T-cell (primary cell): ENCODE measurements at regions of chr10 and their contacts with region 1.

Region 1: DNA sequence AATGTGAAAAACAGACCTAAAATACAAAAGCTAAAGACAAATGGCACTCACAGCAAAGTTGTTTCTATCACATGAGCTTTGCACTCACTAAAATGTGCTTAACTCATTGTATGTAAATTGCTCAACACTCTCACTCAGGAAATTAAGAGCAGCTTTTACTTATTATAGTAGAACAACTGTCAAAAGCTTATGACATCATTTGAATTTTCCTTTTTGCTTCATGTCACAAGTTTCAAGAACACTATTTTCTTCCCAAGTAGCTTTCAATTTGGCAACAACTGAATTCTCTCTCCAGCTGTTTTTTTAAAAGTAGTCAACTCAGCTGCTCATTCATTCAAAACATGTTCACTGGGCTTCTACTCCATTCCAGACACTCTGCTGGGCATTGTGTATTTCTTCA is 46.9 kb downstream of the ATE1 start:
- DNase-seq: no peak
- ATAC-seq: no peak
- H3K4me3 ChIP-seq: no peak overlapping the region
- H3K4me3 Mint-ChIP-seq: no peak overlapping the region
- H3K27ac ChIP-seq: no peak overlapping the region
- H3K27ac Mint-ChIP-seq: no peak overlapping the region
- H3K4me1 ChIP-seq: no peaks in the 10 kb centered on the region
- H3K4me1 Mint-ChIP-seq: peaks cover 2 to 5% (median 2%) of the 10 kb centered on the region in 3 donors
- H3K27me3 ChIP-seq: no peaks in the 10 kb centered on the region
- H3K27me3 Mint-ChIP-seq: no peaks in the 10 kb centered on the region

Region 2: DNA sequence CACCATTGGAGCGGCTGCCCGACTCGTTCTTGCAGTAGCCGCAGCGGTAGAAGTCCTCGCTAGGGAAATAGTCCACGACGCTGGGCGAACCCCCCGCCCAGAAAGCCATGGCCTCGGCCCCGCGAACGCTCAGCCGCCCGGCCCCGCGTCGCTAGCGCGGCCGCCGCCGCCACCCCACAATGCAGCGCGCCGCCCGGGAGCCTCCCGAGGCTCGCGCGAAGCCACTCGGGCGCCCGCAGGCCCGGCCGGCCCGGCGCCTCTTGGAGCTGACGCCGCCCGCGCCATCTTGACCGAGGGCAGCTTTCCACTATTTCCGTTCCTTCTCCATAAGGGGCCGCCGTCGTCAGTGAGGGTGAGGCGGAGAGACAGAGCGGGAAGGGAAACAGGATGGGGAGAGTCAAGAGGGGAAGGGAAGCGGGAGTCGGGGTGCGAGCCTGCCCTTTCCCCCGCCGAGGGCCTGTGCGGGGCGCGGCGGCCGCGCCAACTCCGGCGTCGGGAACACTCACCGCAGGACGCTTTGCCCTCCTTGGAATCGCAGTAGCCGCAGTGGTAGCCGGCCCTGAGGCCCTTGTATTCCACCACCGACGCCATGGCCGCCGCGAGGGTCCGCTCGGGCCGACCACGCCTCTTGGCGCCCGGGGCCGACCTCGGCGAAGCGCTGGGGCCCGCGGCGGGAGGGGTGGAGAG is 47.1 kb after region 1 on chr10 and contains the start of gene ATE1:
- CTCF ChIA-PET with region 1: no interaction called
- POLR2A ChIA-PET with region 1: interaction called in 1 of 2 experiments, 10 read pairs
- DNase-seq: peak; percentile 62 to 90 (median 77)
- ATAC-seq: peak; percentile 96 to 98 (median 97)
- H3K4me3 ChIP-seq: peak within 1 kb of the TSS; percentile 69 to 92
- H3K4me3 Mint-ChIP-seq: peak within 1 kb of the TSS; percentile 83 to 94 (median 92)
- H3K27ac ChIP-seq: peak within 1 kb of the TSS; percentile 89
- H3K27ac Mint-ChIP-seq: peak within 1 kb of the TSS; percentile 91 to 93
- H3K4me1 ChIP-seq: peaks cover 4 to 8% of the 10 kb centered on the region in 2 experiments
- H3K4me1 Mint-ChIP-seq: peaks cover 30 to 37% (median 34%) of the 10 kb centered on the region in 3 donors
- H3K27me3 ChIP-seq: no peaks in the 10 kb centered on the region
- H3K27me3 Mint-ChIP-seq: no peaks in the 10 kb centered on the region
- total RNA-seq, gene ATE1: 18.6 to 28.9 (median 26.0) TPM